ENCODE measurements at regions of chr3 and their contacts with region 1.

Region 1: GRCh38 chr3:107574650-107575049 is 51.9 kb downstream of the BBX start:
- DNase-seq: peak; percentile 22
- CTCF ChIP-seq: peak; percentile 61

Region 2: GRCh38 chr3:107545680-107546120 is 28.9 kb before region 1 on chr3:
- CTCF ChIA-PET with region 1: no interaction called
- POLR2A ChIA-PET with region 1: no interaction called
- DNase-seq: no peak
- CTCF ChIP-seq: no peak

Region 3: DNA sequence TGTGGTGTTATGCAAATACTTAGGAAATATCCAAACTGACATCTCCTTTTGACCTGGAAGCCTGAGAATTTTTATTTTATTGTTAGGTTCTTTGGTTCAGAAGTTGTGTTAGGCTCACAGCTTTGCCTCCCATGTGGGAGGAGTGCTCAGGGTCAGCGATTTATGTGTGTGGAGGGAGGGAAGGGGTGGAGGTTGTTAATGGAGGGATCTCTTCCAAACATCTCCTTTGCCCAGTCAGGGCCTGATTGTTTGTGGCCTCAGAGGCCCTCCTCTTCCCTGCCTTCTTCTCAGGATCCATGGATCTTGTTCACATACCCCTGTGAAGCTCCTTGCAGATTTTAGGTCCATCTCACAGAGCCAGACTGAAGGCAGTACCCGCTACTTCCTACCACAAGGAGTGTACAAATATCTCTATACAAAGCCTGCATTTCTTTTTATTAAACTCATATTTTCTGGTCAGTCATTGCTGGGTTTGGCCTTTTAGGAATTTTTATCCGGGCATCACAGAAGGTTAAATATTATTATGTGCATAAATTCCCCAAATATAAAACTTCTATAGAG is 11.6 kb before region 1 on chr3:
- CTCF ChIA-PET with region 1: interaction called, 10 read pairs
- POLR2A ChIA-PET with region 1: no interaction called
- DNase-seq: no peak
- CTCF ChIP-seq: no peak

Region 4: DNA sequence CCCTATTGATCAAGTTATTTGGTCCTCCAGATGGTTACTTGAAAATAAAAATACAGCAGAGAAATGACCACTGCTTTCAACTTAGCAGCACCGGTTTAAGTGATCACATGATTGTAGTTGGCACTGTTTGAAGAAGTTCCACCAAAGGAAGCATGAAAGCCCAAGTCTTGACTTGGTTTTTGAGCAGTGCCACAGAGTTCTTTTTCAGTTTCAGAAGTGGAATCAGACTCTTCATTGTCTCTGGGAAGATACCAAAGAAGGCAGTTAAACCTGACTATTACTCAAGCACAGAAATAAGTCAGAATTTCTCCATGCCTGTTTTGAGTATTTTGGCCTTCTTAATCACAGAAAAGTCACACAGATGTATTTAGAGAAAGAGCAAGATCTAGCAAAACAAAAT is 14.8 kb after region 1 on chr3:
- CTCF ChIA-PET with region 1: interaction called, 16 read pairs
- POLR2A ChIA-PET with region 1: no interaction called
- DNase-seq: no peak
- CTCF ChIP-seq: no peak

Region 5: GRCh38 chr3:107612664-107613084 is 38.0 kb after region 1 on chr3:
- CTCF ChIA-PET with region 1: no interaction called
- POLR2A ChIA-PET with region 1: no interaction called
- DNase-seq: no peak
- CTCF ChIP-seq: no peak

Region 6: GRCh38 chr3:107629566-107629965 is 54.9 kb after region 1 on chr3:
- CTCF ChIA-PET with region 1: no interaction called
- POLR2A ChIA-PET with region 1: no interaction called
- DNase-seq: no peak
- CTCF ChIP-seq: no peak